ENCODE measurements at regions of chr14 and their contacts with region 1.

Region 1: GRCh38 chr14:97246648-97247047 is 449.5 kb downstream of the VRK1 start:
- DNase-seq: no peak
- H3K4me3 ChIP-seq: no peak overlapping the region
- H3K27ac ChIP-seq: no peak overlapping the region
- H3K4me1 ChIP-seq: no peaks in the 10 kb centered on the region
- H3K27me3 ChIP-seq: no peaks in the 10 kb centered on the region
- CTCF ChIP-seq: no peak
- POLR2A ChIP-seq: no peak

Region 2: DNA sequence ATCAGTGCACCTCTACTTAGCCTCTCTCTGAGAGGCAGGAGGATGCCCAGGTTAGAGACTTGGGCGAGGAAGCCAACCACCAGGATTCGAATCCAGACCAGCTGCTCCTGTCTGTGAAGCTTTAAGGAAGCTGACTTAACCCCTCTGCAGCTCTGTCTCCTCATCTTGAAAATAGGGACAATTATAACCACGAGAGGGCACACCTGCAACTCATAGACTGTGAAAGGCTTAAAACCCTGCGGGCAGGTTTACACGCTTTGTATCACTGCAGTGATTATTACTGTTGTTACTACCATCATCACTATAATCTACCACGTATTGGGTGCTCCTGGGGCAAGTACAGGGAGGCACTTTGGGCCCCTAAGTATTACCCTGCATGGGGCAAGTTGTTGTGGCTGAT is 69.6 kb before region 1 on chr14:
- intact Hi-C with region 1: loop called (anchors 2 kb)
- DNase-seq: no peak
- H3K4me3 ChIP-seq: no peak overlapping the region
- H3K27ac ChIP-seq: no peak overlapping the region
- H3K4me1 ChIP-seq: no peaks in the 10 kb centered on the region
- H3K27me3 ChIP-seq: peaks cover 0 to 19% of the 10 kb centered on the region in 2 donors
- CTCF ChIP-seq: no peak
- POLR2A ChIP-seq: no peak

Region 3: DNA sequence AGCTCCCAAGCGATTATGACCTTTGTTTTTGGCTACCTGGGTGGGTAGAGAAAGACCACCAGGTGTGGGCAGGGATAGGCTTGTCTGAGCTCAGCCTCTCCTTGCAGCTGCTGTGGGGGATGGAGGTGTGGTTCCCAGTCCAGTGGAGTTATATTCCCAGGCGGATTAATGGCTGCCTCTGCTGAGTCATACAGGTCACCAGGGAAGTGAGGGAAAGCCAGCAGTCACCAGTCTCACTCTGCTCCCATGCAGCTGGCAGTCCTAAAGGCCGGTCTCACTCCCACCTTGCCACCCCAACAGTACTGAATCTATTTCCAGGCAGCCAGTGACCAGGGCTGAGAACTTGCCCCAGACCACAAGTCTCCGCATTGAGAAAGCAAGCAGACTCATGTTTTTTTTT is 50.3 kb before region 1 on chr14:
- intact Hi-C with region 1: no loop called
- DNase-seq: no peak
- H3K4me3 ChIP-seq: no peak overlapping the region
- H3K27ac ChIP-seq: no peak overlapping the region
- H3K4me1 ChIP-seq: no peaks in the 10 kb centered on the region
- H3K27me3 ChIP-seq: no peaks in the 10 kb centered on the region
- CTCF ChIP-seq: no peak
- POLR2A ChIP-seq: no peak

Measured in breast epithelium (tissue), 4 donors.